ENCODE measurements at regions of chr3 and their contacts with region 1.

Region 1: GRCh38 chr3:197949754-197950660 is at the start of gene RPL35A:
- DNase-seq: peak; percentile 91
- ATAC-seq: peak; percentile 92
- H3K4me3 Mint-ChIP-seq: peak within 1 kb of the TSS; percentile 95
- H3K27ac Mint-ChIP-seq: peak within 1 kb of the TSS; percentile 99
- H3K4me1 Mint-ChIP-seq: peaks cover 32% of the 10 kb centered on the region
- H3K27me3 Mint-ChIP-seq: no peaks in the 10 kb centered on the region
- CTCF ChIP-seq: no peak
- total RNA-seq, gene RPL35A: 1,685 to 1,707 TPM

Region 2: GRCh38 chr3:197959898-197960693 is 10.1 kb after region 1 on chr3 and contains the start of gene LMLN:
- CTCF ChIA-PET with region 1: interaction called, 3 read pairs
- POLR2A ChIA-PET with region 1: interaction called, 14 read pairs
- intact Hi-C with region 1: loop called (anchors 1 kb)
- DNase-seq: peak; percentile 97
- ATAC-seq: peak; percentile 93
- H3K4me3 Mint-ChIP-seq: peak within 1 kb of the TSS; percentile 92
- H3K27ac Mint-ChIP-seq: peak within 1 kb of the TSS; percentile 98
- H3K4me1 Mint-ChIP-seq: peaks cover 55% of the 10 kb centered on the region
- H3K27me3 Mint-ChIP-seq: no peaks in the 10 kb centered on the region
- CTCF ChIP-seq: no peak
- total RNA-seq, gene LMLN: 6.3 to 10.4 TPM

Measured in activated CD8-positive, alpha-beta T cell treated with anti-CD3 and anti-CD28 coated beads for 36 hours (primary cell).